ENCODE measurements at regions of chr9 and their contacts with region 1.

Region 1: GRCh38 chr9:16335788-16336580 is 534.5 kb downstream of the BNC2 start:
- DNase-seq: peak; percentile 38 to 92 (median 43)
- H3K4me3 ChIP-seq: no peak overlapping the region
- H3K4me3 Mint-ChIP-seq: no peak overlapping the region
- H3K27ac ChIP-seq: peak overlapping the region in 1 of 2 donors; percentile 7
- H3K27ac Mint-ChIP-seq: peak overlapping the region; percentile 16 to 88 (median 79)
- H3K4me1 ChIP-seq: peaks cover 0 to 14% of the 10 kb centered on the region in 2 donors
- H3K4me1 Mint-ChIP-seq: peaks cover 13% of the 10 kb centered on the region
- H3K27me3 ChIP-seq: no peaks in the 10 kb centered on the region
- H3K27me3 Mint-ChIP-seq: peaks cover 0 to 5% (median 4%) of the 10 kb centered on the region in 3 donors
- CTCF ChIP-seq: no peak

Region 2: DNA sequence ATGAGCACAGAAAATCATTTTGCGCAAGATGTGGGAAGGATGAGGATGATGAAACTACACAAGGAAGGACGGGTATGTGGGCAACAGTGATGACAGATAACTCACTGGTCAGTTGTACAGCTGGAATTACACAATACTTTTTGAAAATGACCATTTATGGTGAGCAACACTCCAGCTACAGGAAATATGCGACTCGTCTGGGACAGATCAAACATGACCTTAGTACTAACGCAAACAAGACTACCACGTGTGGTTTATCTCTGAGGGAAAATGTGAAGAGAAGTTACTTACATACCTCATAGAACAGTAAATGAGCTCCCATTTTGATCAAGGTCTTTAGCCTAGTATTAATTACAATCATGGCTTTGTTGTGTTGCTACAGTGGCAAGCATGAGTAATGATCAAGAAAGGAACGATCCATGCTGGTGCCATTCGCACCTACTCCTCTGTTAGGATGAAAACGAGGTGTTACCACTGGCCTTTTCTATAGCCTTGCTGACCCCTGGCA is 77.6 kb after region 1 on chr9:
- intact Hi-C with region 1: loop called in 1 of 2 experiments (anchors 5 kb)
- DNase-seq: peak; percentile 44 to 96 (median 74)
- H3K4me3 ChIP-seq: no peak overlapping the region
- H3K4me3 Mint-ChIP-seq: peak overlapping the region in 1 of 2 donors; percentile 2
- H3K27ac ChIP-seq: peak overlapping the region in 1 of 2 donors; percentile 46
- H3K27ac Mint-ChIP-seq: peak overlapping the region; percentile 66 to 93 (median 88)
- H3K4me1 ChIP-seq: peaks cover 8 to 17% of the 10 kb centered on the region in 2 donors
- H3K4me1 Mint-ChIP-seq: peaks cover 21% of the 10 kb centered on the region
- H3K27me3 ChIP-seq: no peaks in the 10 kb centered on the region
- H3K27me3 Mint-ChIP-seq: peaks cover 0 to 2% (median 2%) of the 10 kb centered on the region in 3 donors
- CTCF ChIP-seq: no peak

Measured in CD14-positive monocyte (primary cell).